ENCODE measurements at regions of chr13 and their contacts with region 1.

Region 1: DNA sequence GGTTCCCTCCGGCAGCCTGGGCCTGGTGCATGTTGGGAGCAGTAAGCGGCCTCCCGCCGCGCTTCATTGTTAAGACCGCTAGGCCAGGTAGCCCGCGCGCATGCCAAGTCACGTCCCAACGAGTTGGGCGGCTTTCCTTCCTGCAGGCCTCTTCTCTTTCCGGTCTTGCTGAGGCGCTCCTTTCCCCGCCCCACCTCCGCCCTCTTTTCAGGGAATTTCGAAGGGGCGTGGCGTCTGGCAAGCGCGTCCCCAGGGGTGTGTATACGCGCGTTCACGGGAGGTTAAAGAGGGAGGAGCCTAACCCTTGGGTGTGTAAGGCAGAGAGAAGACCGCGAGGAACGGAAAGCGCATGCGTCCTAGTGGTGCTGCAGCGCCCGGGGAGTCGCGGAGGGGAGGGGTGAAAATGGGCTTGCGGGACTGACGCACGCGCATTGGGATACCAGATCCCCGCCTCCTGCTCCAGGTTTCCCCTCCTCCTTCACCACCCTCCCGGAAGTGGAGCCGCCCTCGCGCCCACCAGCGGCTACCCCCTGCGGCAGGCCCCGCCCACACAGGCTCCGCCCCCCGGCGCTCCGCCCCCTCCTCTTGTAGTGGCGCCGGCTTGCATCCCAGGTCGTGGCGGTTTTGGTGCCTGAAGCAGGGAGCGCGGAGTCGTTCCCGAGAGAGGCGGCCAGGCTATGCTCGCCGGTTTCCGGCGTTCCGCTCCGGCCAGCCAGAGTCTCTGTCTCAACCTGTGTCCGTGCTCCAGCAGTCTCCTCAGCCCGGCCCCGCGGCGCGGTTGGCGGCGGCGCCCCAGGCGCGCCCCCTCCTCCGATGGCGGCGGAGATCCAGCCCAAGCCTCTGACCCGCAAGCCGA is at the start of gene WDFY2:
- DNase-seq: peak; percentile 100
- H3K4me3 ChIP-seq: peak within 1 kb of the TSS; percentile 75 to 95 (median 78)
- H3K27ac ChIP-seq: peak within 1 kb of the TSS; percentile 88 to 98 (median 96)
- H3K4me1 ChIP-seq: peaks cover 0 to 30% (median 8%) of the 10 kb centered on the region in 4 donors
- H3K27me3 ChIP-seq: no peaks in the 10 kb centered on the region
- CTCF ChIP-seq: peak in 2 of 5 experiments; percentile 42 to 44
- EP300 ChIP-seq: no peak
- POLR2A ChIP-seq: peak; percentile 78
- total RNA-seq, gene WDFY2: 2.4 to 12.3 (median 6.7) TPM

Region 2: DNA sequence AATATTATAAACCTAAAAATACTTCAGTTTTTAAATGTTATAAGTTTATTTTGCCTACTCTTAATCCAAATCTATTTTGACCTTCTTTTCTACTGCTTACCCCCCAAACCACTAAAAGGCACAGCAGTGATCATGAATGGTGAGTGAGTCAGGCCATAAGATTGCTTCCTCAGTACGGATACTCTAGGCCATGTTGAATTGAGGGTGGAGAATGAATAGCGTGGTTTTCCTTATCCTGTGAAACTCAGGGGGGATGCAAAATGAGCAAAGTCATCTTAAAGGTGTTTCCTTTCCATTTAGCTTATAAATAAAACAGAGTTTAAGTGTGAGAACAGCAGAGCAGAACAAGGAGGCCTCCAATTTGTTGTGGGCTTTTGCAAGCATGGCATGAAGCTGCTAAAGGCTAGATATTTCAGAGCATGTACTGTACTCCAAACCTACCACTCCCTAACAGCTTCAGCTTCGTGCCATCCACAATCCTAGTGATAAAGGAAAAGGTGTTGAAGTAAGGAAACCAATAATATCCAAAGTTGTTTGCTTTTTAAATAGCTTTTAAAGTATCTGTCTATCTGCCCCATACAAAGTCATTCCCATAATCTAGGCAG is 219.6 kb before region 1 on chr13:
- in situ Hi-C with region 1: no loop called
- intact Hi-C with region 1: no loop called
- DNase-seq: no peak
- H3K4me3 ChIP-seq: no peak overlapping the region
- H3K27ac ChIP-seq: no peak overlapping the region
- H3K4me1 ChIP-seq: no peaks in the 10 kb centered on the region
- H3K27me3 ChIP-seq: no peaks in the 10 kb centered on the region
- CTCF ChIP-seq: no peak
- EP300 ChIP-seq: no peak
- POLR2A ChIP-seq: no peak

Region 3: GRCh38 chr13:51452361-51453206 is 131.5 kb before region 1 on chr13 and contains the start of gene INTS6:
- in situ Hi-C with region 1: loop called in 1 of 4 experiments (anchors 10 kb)
- intact Hi-C with region 1: loop called (anchors 5 kb)
- DNase-seq: peak; percentile 37
- H3K4me3 ChIP-seq: peak within 1 kb of the TSS; percentile 74 to 99 (median 90)
- H3K27ac ChIP-seq: peak within 1 kb of the TSS; percentile 99 to 100 (median 100)
- H3K4me1 ChIP-seq: peaks cover 14 to 28% (median 22%) of the 10 kb centered on the region in 4 donors
- H3K27me3 ChIP-seq: no peaks in the 10 kb centered on the region
- CTCF ChIP-seq: no peak
- EP300 ChIP-seq: no peak
- POLR2A ChIP-seq: peak; percentile 100
- total RNA-seq, gene INTS6: 15.3 to 37.0 (median 25.2) TPM

Region 4: GRCh38 chr13:51729866-51730546 is 145.9 kb after region 1 on chr13:
- in situ Hi-C with region 1: no loop called
- intact Hi-C with region 1: loop called (anchors 10 kb)
- DNase-seq: peak; percentile 19
- H3K4me3 ChIP-seq: no peak overlapping the region
- H3K27ac ChIP-seq: peak overlapping the region; percentile 52 to 71 (median 64)
- H3K4me1 ChIP-seq: peaks cover 0 to 27% (median 7%) of the 10 kb centered on the region in 4 donors
- H3K27me3 ChIP-seq: no peaks in the 10 kb centered on the region
- CTCF ChIP-seq: no peak
- EP300 ChIP-seq: no peak
- POLR2A ChIP-seq: no peak

Region 5: GRCh38 chr13:51797664-51798488 is 213.8 kb after region 1 on chr13:
- in situ Hi-C with region 1: loop called in 2 of 4 experiments (anchors 10 to 25 kb)
- intact Hi-C with region 1: loop called (anchors 10 kb)
- DNase-seq: peak; percentile 51
- H3K4me3 ChIP-seq: no peak overlapping the region
- H3K27ac ChIP-seq: no peak overlapping the region
- H3K4me1 ChIP-seq: peaks cover 16 to 27% (median 17%) of the 10 kb centered on the region in 4 donors
- H3K27me3 ChIP-seq: no peaks in the 10 kb centered on the region
- CTCF ChIP-seq: peak; percentile 42 to 70 (median 47)
- EP300 ChIP-seq: no peak
- POLR2A ChIP-seq: no peak

Region 6: DNA sequence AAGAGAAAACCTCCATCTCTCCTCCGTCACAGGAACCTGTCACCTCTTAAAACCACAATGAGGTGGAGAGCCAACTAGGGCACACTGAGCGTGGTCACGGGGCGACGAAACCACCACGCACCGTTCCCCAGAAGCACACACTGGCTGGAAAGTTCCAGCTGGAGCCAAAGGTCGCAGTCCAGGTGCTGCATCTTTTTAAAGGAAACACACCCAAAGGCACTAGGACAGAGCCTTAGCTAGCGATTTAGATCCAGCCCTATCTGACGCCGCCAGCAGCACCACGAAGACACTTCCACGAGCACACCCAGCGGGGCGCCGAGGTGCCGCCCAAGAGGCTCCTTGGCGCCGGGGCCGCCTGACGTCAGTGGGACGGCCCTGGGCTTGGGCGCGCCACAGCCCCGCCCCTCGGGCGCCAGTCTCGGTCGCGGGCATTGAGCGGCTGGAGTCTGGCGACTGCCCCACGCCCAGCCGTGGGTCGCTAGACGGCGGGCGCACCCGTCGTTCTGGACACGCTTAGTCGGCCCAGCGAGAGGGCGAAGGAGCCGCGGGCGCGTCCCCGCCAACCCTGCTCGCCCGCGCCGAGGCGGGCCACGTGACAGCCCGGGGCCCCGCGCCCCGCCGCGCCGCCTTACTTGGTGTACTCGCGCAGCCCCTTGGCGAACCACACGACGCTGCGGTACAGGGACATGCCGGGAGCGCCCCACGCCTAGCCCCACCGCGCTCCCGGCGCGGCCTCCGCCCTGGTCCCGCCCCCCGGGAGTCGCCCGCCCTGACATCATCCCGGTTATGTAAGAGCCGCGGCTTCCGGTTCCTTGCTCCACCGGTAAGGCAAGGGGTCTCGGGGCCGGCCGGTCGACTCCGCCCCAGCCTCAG is 219.6 kb after region 1 on chr13 and contains the start of gene DHRS12:
- in situ Hi-C with region 1: loop called in 2 of 4 experiments (anchors 10 to 25 kb)
- intact Hi-C with region 1: loop called (anchors 10 kb)
- DNase-seq: peak; percentile 94
- H3K4me3 ChIP-seq: peak within 1 kb of the TSS; percentile 72 to 94 (median 80)
- H3K27ac ChIP-seq: peak within 1 kb of the TSS; percentile 99 to 100 (median 100)
- H3K4me1 ChIP-seq: peaks cover 20 to 44% (median 30%) of the 10 kb centered on the region in 4 donors
- H3K27me3 ChIP-seq: no peaks in the 10 kb centered on the region
- CTCF ChIP-seq: no peak
- EP300 ChIP-seq: peak; percentile 53
- POLR2A ChIP-seq: peak; percentile 88
- total RNA-seq, gene DHRS12: 5.2 to 17.8 (median 13.5) TPM